OCI-LY7 (cell line): ENCODE measurements at regions of chrX and their contacts with region 1.

Region 1: DNA sequence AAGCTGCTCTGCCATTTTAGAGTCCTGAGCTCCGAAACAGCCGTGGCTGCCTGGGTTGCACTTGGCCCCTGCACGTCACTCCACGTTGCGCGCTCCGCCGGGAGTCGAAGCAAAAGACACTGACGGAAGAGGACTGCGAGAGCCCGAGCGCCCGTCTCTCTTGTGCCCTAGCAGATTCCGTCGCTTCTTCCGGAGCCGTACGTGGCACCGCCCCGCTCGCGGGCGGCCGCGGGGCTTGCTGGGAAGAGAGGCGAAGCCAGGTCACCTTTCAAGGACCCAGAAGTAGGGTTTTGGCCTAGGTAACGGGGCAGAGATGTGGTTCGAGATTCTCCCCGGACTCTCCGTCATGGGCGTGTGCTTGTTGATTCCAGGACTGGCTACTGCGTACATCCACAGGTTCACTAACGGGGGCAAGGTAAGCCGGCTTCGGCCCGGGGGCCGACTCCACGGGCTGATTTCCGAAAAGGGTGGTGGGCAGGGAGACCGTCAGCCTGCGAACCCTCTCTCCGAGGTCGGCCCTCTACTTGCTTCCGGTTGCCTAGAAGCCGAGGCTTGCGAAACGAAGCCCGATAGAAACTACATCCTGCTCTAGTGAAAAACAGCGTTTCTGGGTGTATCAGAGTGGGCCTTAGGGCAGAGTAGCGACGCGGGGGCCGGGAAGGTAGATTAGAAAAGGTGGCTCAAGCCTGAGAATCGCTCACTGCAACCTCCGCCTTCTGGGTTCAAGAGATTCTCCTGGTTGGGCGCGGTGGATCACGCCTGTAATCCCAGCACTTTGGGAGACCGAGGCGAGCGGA is at the starts of genes NDUFA1 and RNF113A:
- DNase-seq: peak; percentile 90
- H3K4me3 ChIP-seq: peak within 1 kb of the TSS; percentile 91
- H3K27ac ChIP-seq: peak within 1 kb of the TSS; percentile 93
- H3K4me1 ChIP-seq: peaks cover 18% of the 10 kb centered on the region
- CTCF ChIP-seq: no peak
- total RNA-seq, gene NDUFA1: 61.3 and 82.1 TPM in 2 replicates
- total RNA-seq, gene RNF113A: 32.8 and 37.4 TPM in 2 replicates

Region 2: GRCh38 chrX:119833905-119834304 is 37.9 kb before region 1 on chrX:
- CTCF ChIA-PET with region 1: no interaction called
- POLR2A ChIA-PET with region 1: no interaction called
- intact Hi-C with region 1: no loop called
- DNase-seq: no peak
- H3K4me3 ChIP-seq: no peak overlapping the region
- H3K27ac ChIP-seq: no peak overlapping the region
- H3K4me1 ChIP-seq: no peaks in the 10 kb centered on the region
- CTCF ChIP-seq: no peak

Region 3: GRCh38 chrX:119852382-119853353 is 19.1 kb before region 1 on chrX and contains the start of gene UPF3B:
- CTCF ChIA-PET with region 1: interaction called, 3 read pairs
- POLR2A ChIA-PET with region 1: interaction called, 14 read pairs
- intact Hi-C with region 1: loop called (anchors 2 kb)
- DNase-seq: peak; percentile 98
- H3K4me3 ChIP-seq: peak within 1 kb of the TSS; percentile 96
- H3K27ac ChIP-seq: peak within 1 kb of the TSS; percentile 44
- H3K4me1 ChIP-seq: peaks cover 15% of the 10 kb centered on the region
- CTCF ChIP-seq: no peak
- total RNA-seq, gene UPF3B: 8.7 and 10.8 TPM in 2 replicates